CD4-positive, alpha-beta memory T cell (primary cell): ENCODE measurements at regions of chr3 and their contacts with region 1.

Region 1: DNA sequence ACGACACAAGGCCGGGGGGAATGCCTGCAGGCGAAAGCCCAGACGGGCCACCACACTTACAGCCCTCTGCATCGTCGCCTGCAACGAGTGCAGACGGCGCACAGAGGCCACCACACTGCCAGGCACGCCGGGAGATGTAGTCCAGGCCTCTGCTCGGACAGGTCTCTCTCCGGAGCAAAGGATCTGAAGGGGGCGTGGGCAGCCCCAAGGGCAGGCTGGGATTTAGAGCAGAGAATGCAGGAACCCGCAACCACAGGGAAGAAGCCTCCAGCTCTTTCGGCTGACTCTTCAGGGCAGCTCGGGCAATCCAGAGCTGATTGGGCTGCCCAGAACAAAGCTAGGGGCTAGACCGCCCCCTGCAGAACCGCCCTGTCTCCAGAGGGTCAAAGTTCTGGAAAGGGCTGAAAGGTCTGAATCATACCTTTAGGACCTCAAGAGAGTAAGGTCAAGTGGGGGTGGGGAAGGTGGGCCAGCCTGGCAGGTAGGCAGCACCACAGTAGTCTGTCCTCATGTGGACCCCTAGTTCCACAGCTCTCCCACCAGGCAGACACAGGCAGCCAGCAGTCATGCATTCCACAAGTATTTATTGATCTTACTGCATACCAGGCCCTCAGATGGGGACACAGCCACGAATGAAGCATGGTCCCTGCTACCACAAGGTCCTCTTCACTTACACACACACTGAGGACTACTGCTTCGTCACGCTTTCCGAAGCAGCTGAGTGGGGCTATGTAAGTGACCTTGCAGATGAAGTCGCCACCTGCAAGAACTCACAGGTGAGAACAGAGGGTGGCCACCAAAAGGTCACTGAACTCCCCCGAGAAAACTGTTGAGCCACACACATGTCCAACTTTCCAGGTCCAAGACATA is at the start of gene AMT:
- DNase-seq: no peak
- H3K4me3 ChIP-seq: no peak within 1 kb of the TSS
- H3K4me3 Mint-ChIP-seq: peak within 1 kb of the TSS in 1 of 8 donors; percentile 35
- H3K27ac ChIP-seq: no peak within 1 kb of the TSS
- H3K27ac Mint-ChIP-seq: peak within 1 kb of the TSS in 5 of 7 donors; percentile 29 to 83 (median 61)
- H3K4me1 ChIP-seq: peaks cover 13% of the 10 kb centered on the region
- H3K4me1 Mint-ChIP-seq: peaks cover 18 to 50% (median 33%) of the 10 kb centered on the region in 4 donors
- H3K27me3 ChIP-seq: no peaks in the 10 kb centered on the region
- H3K27me3 Mint-ChIP-seq: no peaks in the 10 kb centered on the region
- total RNA-seq, gene AMT: 6.4 to 7.6 TPM

Region 2: GRCh38 chr3:49454458-49454857 is 31.8 kb after region 1 on chr3:
- CTCF ChIA-PET with region 1: interaction called, 46 read pairs
- POLR2A ChIA-PET with region 1: no interaction called
- intact Hi-C with region 1: no loop called
- DNase-seq: no peak
- H3K4me3 ChIP-seq: no peak overlapping the region
- H3K4me3 Mint-ChIP-seq: no peak overlapping the region
- H3K27ac ChIP-seq: no peak overlapping the region
- H3K27ac Mint-ChIP-seq: peak overlapping the region in 2 of 7 donors; percentile 19 to 60
- H3K4me1 ChIP-seq: no peaks in the 10 kb centered on the region
- H3K4me1 Mint-ChIP-seq: no peaks in the 10 kb centered on the region
- H3K27me3 ChIP-seq: no peaks in the 10 kb centered on the region
- H3K27me3 Mint-ChIP-seq: peaks cover 0 to 3% of the 10 kb centered on the region in 2 donors

Region 3: GRCh38 chr3:50442945-50443579 is 1020.4 kb after region 1 on chr3:
- CTCF ChIA-PET with region 1: no interaction called
- POLR2A ChIA-PET with region 1: no interaction called
- intact Hi-C with region 1: no loop called
- DNase-seq: no peak
- H3K4me3 ChIP-seq: no peak overlapping the region
- H3K4me3 Mint-ChIP-seq: no peak overlapping the region
- H3K27ac ChIP-seq: no peak overlapping the region
- H3K27ac Mint-ChIP-seq: no peak overlapping the region
- H3K4me1 ChIP-seq: no peaks in the 10 kb centered on the region
- H3K4me1 Mint-ChIP-seq: peaks cover 0 to 1% (median 0%) of the 10 kb centered on the region in 4 donors
- H3K27me3 ChIP-seq: no peaks in the 10 kb centered on the region
- H3K27me3 Mint-ChIP-seq: no peaks in the 10 kb centered on the region